ENCODE measurements at regions of chr17 and their contacts with region 1.

Region 1: DNA sequence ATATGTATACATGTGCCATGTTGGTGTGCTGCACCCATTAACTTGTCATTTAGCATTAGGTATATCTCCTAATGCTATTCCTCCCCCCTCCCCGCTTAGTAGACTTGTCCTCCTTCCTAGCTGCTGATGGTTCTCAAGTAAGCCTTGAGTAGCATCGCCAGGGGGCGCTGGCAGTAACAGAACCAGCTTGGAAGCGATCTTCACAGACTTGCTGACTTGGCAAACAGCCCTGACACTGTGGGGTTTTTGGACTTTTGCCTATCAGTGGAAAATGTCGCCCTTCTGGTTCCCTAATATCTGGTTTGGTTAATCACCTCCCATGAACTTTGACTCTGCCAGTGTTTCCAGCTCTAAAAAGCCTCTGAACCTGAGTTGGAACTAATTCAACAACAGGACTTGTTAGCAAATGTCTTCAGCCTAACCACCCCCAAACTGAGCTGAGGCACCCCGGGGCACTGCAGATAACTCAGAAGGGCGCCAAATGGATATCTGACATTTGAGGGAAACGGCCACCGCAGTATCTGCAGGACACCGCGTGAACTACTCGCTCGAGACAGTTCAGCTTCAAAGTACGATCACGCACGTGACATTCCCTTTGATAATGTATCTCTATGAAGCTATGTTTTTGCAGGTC is 15.4 kb upstream of the SPATA32 start:
- DNase-seq: peak; percentile 79 to 94 (median 85)
- ATAC-seq: peak; percentile 96 to 98
- H3K4me3 Mint-ChIP-seq: peak overlapping the region in 1 of 10 donors; percentile 15
- H3K27ac Mint-ChIP-seq: peak overlapping the region in 6 of 10 donors; percentile 46 to 85 (median 54)
- H3K4me1 Mint-ChIP-seq: peaks cover 7 to 10% (median 9%) of the 10 kb centered on the region in 4 donors
- H3K27me3 Mint-ChIP-seq: no peaks in the 10 kb centered on the region

Region 2: GRCh38 chr17:45218895-45219661 is 58.3 kb before region 1 on chr17:
- POLR2A ChIA-PET with region 1: interaction called, 1,514 read pairs
- DNase-seq: peak; percentile 70 to 95 (median 85)
- ATAC-seq: peak; percentile 20 to 28
- H3K4me3 Mint-ChIP-seq: peak overlapping the region; percentile 89 to 96 (median 92)
- H3K27ac Mint-ChIP-seq: peak overlapping the region; percentile 74 to 96 (median 87)
- H3K4me1 Mint-ChIP-seq: peaks cover 24 to 55% (median 41%) of the 10 kb centered on the region in 4 donors
- H3K27me3 Mint-ChIP-seq: no peaks in the 10 kb centered on the region

Region 3: GRCh38 chr17:45247429-45248131 is 29.8 kb before region 1 on chr17:
- POLR2A ChIA-PET with region 1: interaction called, 1,514 read pairs
- DNase-seq: peak; percentile 90 to 98 (median 92)
- ATAC-seq: peak; percentile 76 to 79
- H3K4me3 Mint-ChIP-seq: peak overlapping the region; percentile 85 to 93 (median 92)
- H3K27ac Mint-ChIP-seq: peak overlapping the region; percentile 92 to 99 (median 98)
- H3K4me1 Mint-ChIP-seq: peaks cover 20 to 73% (median 71%) of the 10 kb centered on the region in 4 donors
- H3K27me3 Mint-ChIP-seq: no peaks in the 10 kb centered on the region

Region 4: DNA sequence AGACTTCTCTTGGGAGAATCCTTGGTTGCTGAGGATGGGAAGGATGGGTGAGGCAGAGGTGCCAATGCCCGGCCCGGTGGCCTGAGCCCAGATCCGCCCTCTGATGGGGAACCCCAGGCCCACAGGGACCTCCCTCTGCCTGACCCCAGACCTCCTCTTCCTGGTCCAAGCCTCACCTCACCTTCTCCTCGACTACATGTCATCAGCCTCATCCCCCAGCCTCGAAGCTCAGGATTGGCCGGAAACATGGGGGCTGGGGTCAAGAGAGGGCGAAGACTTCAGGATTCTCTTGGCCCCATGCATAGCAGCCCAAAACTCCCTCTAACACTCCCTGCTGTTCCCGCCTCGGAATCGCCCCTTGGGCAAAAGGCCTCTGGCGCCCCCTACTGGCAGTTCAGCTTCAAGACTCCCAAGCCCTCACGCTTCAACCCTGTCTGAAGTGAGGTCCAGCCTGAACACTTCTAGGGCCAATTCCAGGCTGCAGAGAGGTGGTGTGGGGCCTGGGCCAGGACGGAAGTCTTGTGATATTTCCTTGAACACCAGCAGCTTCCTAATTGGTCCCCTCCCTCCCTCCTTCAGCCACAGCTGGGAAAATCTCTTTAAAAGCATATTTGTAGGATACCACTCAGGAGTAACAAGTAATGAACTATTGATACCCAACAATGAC is 108.1 kb after region 1 on chr17:
- POLR2A ChIA-PET with region 1: interaction called, 21 read pairs
- DNase-seq: peak; percentile 72 to 92 (median 86)
- ATAC-seq: peak; percentile 91 to 99
- H3K4me3 Mint-ChIP-seq: peak overlapping the region in 2 of 10 donors; percentile 9 to 18
- H3K27ac Mint-ChIP-seq: peak overlapping the region in 2 of 10 donors; percentile 47 to 67
- H3K4me1 Mint-ChIP-seq: peaks cover 9 to 39% (median 16%) of the 10 kb centered on the region in 4 donors
- H3K27me3 Mint-ChIP-seq: peaks cover 0 to 16% (median 4%) of the 10 kb centered on the region in 5 donors

Measured in naive thymus-derived CD8-positive, alpha-beta T cell (primary cell).